Naive thymus-derived CD4-positive, alpha-beta T cell (primary cell): ENCODE measurements at regions of chrX and their contacts with region 1.

Region 1: GRCh38 chrX:112731793-112732575 is 52.2 kb upstream of the LHFPL1 start:
- DNase-seq: peak in 1 of 9 donors; percentile 2
- ATAC-seq: no peak
- H3K4me3 ChIP-seq: no peak overlapping the region
- H3K4me3 Mint-ChIP-seq: no peak overlapping the region
- H3K27ac ChIP-seq: no peak overlapping the region
- H3K27ac Mint-ChIP-seq: no peak overlapping the region
- H3K4me1 ChIP-seq: no peaks in the 10 kb centered on the region
- H3K4me1 Mint-ChIP-seq: peaks cover 0 to 8% (median 5%) of the 10 kb centered on the region in 7 donors
- H3K27me3 ChIP-seq: no peaks in the 10 kb centered on the region
- H3K27me3 Mint-ChIP-seq: peaks cover 0 to 10% (median 4%) of the 10 kb centered on the region in 5 donors

Region 2: GRCh38 chrX:111719426-111720210 is 1012.4 kb before region 1 on chrX:
- CTCF ChIA-PET with region 1: no interaction called
- POLR2A ChIA-PET with region 1: no interaction called
- intact Hi-C with region 1: loop called in 1 of 2 experiments (anchors 10 kb)
- DNase-seq: no peak
- ATAC-seq: no peak
- H3K4me3 ChIP-seq: no peak overlapping the region
- H3K4me3 Mint-ChIP-seq: no peak overlapping the region
- H3K27ac ChIP-seq: no peak overlapping the region
- H3K27ac Mint-ChIP-seq: peak overlapping the region in 1 of 9 donors; percentile 90
- H3K4me1 ChIP-seq: no peaks in the 10 kb centered on the region
- H3K4me1 Mint-ChIP-seq: peaks cover 0 to 5% (median 0%) of the 10 kb centered on the region in 7 donors
- H3K27me3 ChIP-seq: no peaks in the 10 kb centered on the region
- H3K27me3 Mint-ChIP-seq: no peaks in the 10 kb centered on the region

Region 3: DNA sequence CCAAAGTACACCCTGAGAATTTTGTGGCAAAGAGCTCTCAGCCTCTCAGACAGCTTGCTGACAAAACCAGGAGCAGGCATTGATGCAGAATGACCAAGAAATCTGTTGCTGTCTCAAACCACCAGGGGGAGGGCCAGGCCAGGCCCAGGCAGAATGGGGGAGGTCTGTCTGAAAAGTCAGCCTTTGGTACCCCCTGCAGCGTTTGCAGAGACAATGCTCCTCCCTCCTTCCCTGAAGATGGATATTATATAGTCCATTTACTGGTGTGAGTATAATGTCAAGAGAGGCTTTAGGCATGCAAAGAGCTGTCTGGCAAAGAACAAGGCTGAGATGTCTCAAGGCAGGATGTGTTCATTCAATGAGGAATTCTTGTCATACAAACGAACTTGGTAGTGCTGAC is 908.9 kb before region 1 on chrX:
- CTCF ChIA-PET with region 1: no interaction called
- POLR2A ChIA-PET with region 1: no interaction called
- intact Hi-C with region 1: loop called in 1 of 2 experiments (anchors 5 kb)
- DNase-seq: peak in 1 of 9 donors; percentile 1
- ATAC-seq: no peak
- H3K4me3 ChIP-seq: no peak overlapping the region
- H3K4me3 Mint-ChIP-seq: no peak overlapping the region
- H3K27ac ChIP-seq: no peak overlapping the region
- H3K27ac Mint-ChIP-seq: no peak overlapping the region
- H3K4me1 ChIP-seq: no peaks in the 10 kb centered on the region
- H3K4me1 Mint-ChIP-seq: no peaks in the 10 kb centered on the region
- H3K27me3 ChIP-seq: no peaks in the 10 kb centered on the region
- H3K27me3 Mint-ChIP-seq: peaks cover 0 to 12% (median 0%) of the 10 kb centered on the region in 5 donors

Region 4: GRCh38 chrX:111869639-111870034 is 862.3 kb before region 1 on chrX:
- CTCF ChIA-PET with region 1: no interaction called
- POLR2A ChIA-PET with region 1: no interaction called
- intact Hi-C with region 1: loop called (anchors 2 to 10 kb)
- DNase-seq: peak in 4 of 9 donors; percentile 5 to 22 (median 10)
- ATAC-seq: no peak
- H3K4me3 ChIP-seq: no peak overlapping the region
- H3K4me3 Mint-ChIP-seq: no peak overlapping the region
- H3K27ac ChIP-seq: no peak overlapping the region
- H3K27ac Mint-ChIP-seq: no peak overlapping the region
- H3K4me1 ChIP-seq: no peaks in the 10 kb centered on the region
- H3K4me1 Mint-ChIP-seq: peaks cover 0 to 7% (median 0%) of the 10 kb centered on the region in 7 donors
- H3K27me3 ChIP-seq: no peaks in the 10 kb centered on the region
- H3K27me3 Mint-ChIP-seq: peaks cover 0 to 10% (median 4%) of the 10 kb centered on the region in 5 donors

Region 5: GRCh38 chrX:112968349-112969135 is 236.6 kb after region 1 on chrX:
- CTCF ChIA-PET with region 1: no interaction called
- POLR2A ChIA-PET with region 1: no interaction called
- intact Hi-C with region 1: no loop called
- DNase-seq: no peak
- ATAC-seq: no peak
- H3K4me3 ChIP-seq: no peak overlapping the region
- H3K4me3 Mint-ChIP-seq: no peak overlapping the region
- H3K27ac ChIP-seq: no peak overlapping the region
- H3K27ac Mint-ChIP-seq: no peak overlapping the region
- H3K4me1 ChIP-seq: no peaks in the 10 kb centered on the region
- H3K4me1 Mint-ChIP-seq: no peaks in the 10 kb centered on the region
- H3K27me3 ChIP-seq: no peaks in the 10 kb centered on the region
- H3K27me3 Mint-ChIP-seq: no peaks in the 10 kb centered on the region

Region 6: DNA sequence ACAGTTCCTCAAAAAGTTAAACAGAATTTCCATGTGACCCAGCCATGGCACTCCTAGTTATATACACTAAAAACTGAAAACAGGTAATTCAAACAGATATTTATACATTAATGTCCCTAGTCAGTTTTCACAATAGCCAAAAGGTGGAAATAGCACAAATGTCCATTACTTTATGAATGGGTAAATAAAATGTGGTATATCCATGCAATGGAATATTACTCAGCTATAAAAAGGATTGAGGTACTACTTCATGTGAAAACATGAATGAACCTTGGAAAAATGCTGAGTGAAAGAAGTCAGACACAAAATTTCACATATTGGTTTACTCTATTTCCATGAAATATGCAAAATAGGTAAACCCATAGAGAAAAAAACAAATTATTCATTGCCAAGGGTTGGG is 460.4 kb after region 1 on chrX:
- CTCF ChIA-PET with region 1: no interaction called
- POLR2A ChIA-PET with region 1: no interaction called
- intact Hi-C with region 1: no loop called
- DNase-seq: no peak
- ATAC-seq: no peak
- H3K4me3 ChIP-seq: no peak overlapping the region
- H3K4me3 Mint-ChIP-seq: no peak overlapping the region
- H3K27ac ChIP-seq: no peak overlapping the region
- H3K27ac Mint-ChIP-seq: no peak overlapping the region
- H3K4me1 ChIP-seq: no peaks in the 10 kb centered on the region
- H3K4me1 Mint-ChIP-seq: no peaks in the 10 kb centered on the region
- H3K27me3 ChIP-seq: no peaks in the 10 kb centered on the region
- H3K27me3 Mint-ChIP-seq: no peaks in the 10 kb centered on the region

Region 7: DNA sequence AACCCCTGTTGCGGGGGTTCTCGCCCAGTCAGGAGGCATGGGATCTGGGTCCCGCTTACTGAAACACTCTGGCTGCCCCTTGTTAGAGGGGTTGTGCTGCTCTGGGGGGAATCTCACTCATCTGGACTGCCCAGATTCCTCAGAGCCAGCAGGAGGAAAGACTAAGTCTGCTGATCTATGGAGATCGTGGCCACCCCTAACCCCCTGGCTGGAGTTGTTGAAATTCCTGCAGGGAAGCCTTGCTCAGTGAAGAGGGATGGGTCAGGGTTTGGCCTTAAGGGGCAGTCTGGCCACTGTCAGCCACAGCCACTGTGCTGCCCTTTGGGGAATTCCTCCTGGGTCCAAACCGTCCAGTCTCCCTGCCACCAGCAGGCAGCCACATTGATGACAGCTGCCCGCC is 470.6 kb after region 1 on chrX:
- CTCF ChIA-PET with region 1: no interaction called
- POLR2A ChIA-PET with region 1: no interaction called
- intact Hi-C with region 1: no loop called
- DNase-seq: no peak
- ATAC-seq: no peak
- H3K4me3 ChIP-seq: no peak overlapping the region
- H3K4me3 Mint-ChIP-seq: no peak overlapping the region
- H3K27ac ChIP-seq: no peak overlapping the region
- H3K27ac Mint-ChIP-seq: no peak overlapping the region
- H3K4me1 ChIP-seq: no peaks in the 10 kb centered on the region
- H3K4me1 Mint-ChIP-seq: no peaks in the 10 kb centered on the region
- H3K27me3 ChIP-seq: no peaks in the 10 kb centered on the region
- H3K27me3 Mint-ChIP-seq: no peaks in the 10 kb centered on the region